Activated CD4-positive, alpha-beta memory T cell treated with anti-CD3 and anti-CD28 coated beads for 36 hours (primary cell): ENCODE measurements at regions of chr4 and their contacts with region 1.

Region 1: GRCh38 chr4:128513664-128514484 is 226.3 kb upstream of the PGRMC2 start:
- DNase-seq: no peak
- H3K4me3 Mint-ChIP-seq: peak overlapping the region; percentile 55
- H3K27ac Mint-ChIP-seq: peak overlapping the region; percentile 38
- H3K4me1 Mint-ChIP-seq: peaks cover 16% of the 10 kb centered on the region
- H3K27me3 Mint-ChIP-seq: no peaks in the 10 kb centered on the region

Region 2: DNA sequence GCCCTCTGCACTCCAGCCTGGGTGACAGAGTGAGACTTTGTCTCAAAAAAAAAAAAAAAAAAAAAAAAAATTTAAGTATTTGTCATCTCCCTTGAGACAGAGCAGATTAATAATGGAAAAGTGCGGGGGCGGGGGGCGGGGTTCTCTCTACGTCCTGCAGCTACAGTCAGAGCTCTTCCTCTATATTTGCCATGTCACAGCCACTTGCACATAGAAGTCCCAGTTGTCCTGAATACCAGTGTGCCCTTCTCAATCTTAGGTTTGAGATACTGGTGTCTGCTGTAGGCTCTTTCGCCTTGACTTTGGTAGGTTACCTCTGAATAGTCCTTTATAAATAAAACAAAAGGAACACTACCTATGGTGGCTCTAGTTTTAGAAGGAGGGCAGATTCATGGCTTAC is 11.5 kb after region 1 on chr4:
- CTCF ChIA-PET with region 1: no interaction called
- POLR2A ChIA-PET with region 1: no interaction called
- intact Hi-C with region 1: loop called (anchors 1 kb)
- DNase-seq: no peak
- H3K4me3 Mint-ChIP-seq: no peak overlapping the region
- H3K27ac Mint-ChIP-seq: no peak overlapping the region
- H3K4me1 Mint-ChIP-seq: peaks cover 3% of the 10 kb centered on the region
- H3K27me3 Mint-ChIP-seq: peaks cover 7% of the 10 kb centered on the region

Region 3: GRCh38 chr4:128553686-128554515 is 40.0 kb after region 1 on chr4:
- CTCF ChIA-PET with region 1: no interaction called
- POLR2A ChIA-PET with region 1: no interaction called
- intact Hi-C with region 1: loop called (anchors 1 kb)
- DNase-seq: no peak
- H3K4me3 Mint-ChIP-seq: peak overlapping the region; percentile 84
- H3K27ac Mint-ChIP-seq: no peak overlapping the region
- H3K4me1 Mint-ChIP-seq: peaks cover 14% of the 10 kb centered on the region
- H3K27me3 Mint-ChIP-seq: peaks cover 12% of the 10 kb centered on the region